Motor neuron (in vitro differentiated cells): ENCODE measurements at regions of chr9 and their contacts with region 1.

Region 1: GRCh38 chr9:35510745-35511428 is 21.0 kb downstream of the RUSC2 start:
- ATAC-seq: peak in 3 of 8 experiments; percentile 82 to 92 (median 90)
- H3K4me3 ChIP-seq: no peak overlapping the region
- H3K27ac ChIP-seq: no peak overlapping the region
- H3K4me1 ChIP-seq: no peaks in the 10 kb centered on the region

Region 2: GRCh38 chr9:35395076-35395705 is 115.7 kb before region 1 on chr9:
- in situ Hi-C with region 1: no loop called
- ATAC-seq: peak in 3 of 8 experiments; percentile 67 to 78 (median 77)
- H3K4me3 ChIP-seq: no peak overlapping the region
- H3K27ac ChIP-seq: no peak overlapping the region
- H3K4me1 ChIP-seq: no peaks in the 10 kb centered on the region

Region 3: DNA sequence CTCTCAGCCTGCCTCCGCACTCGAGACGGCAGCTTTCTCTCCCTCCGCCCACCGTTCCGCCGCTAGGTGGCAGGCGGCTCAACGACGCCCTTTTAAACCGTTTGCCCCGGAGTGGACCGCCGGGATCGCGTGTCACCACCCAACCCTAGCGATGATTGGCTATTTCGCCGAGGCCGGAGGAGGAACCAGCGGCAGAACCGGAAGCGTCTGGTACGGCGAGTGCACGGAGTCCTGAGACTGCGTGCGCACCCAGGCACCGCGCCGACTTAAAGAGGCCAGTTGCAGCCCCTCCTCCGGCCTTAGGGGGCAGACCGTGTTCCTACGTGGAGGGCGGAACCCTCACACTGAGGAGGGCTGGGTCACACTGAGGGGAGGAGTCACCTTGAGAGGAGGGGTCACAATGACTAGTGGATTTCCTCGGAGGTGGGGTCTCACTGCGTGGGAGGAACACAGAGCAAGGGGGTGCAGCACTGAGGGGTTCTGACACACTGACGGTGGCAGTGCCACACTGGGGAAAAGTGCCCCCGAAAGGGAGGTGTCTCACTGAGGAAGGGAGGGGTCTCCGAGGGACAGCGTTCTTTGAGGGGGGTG is 93.2 kb after region 1 on chr9:
- in situ Hi-C with region 1: loop called in 1 of 9 experiments (anchors 25 kb)
- ATAC-seq: peak; percentile 79 to 90 (median 89)
- H3K4me3 ChIP-seq: peak overlapping the region; percentile 62 to 97 (median 94)
- H3K27ac ChIP-seq: peak overlapping the region; percentile 85 to 90
- H3K4me1 ChIP-seq: peaks cover 11 to 17% of the 10 kb centered on the region in 2 donors